ENCODE measurements at regions of chr17 and their contacts with region 1.

Region 1: DNA sequence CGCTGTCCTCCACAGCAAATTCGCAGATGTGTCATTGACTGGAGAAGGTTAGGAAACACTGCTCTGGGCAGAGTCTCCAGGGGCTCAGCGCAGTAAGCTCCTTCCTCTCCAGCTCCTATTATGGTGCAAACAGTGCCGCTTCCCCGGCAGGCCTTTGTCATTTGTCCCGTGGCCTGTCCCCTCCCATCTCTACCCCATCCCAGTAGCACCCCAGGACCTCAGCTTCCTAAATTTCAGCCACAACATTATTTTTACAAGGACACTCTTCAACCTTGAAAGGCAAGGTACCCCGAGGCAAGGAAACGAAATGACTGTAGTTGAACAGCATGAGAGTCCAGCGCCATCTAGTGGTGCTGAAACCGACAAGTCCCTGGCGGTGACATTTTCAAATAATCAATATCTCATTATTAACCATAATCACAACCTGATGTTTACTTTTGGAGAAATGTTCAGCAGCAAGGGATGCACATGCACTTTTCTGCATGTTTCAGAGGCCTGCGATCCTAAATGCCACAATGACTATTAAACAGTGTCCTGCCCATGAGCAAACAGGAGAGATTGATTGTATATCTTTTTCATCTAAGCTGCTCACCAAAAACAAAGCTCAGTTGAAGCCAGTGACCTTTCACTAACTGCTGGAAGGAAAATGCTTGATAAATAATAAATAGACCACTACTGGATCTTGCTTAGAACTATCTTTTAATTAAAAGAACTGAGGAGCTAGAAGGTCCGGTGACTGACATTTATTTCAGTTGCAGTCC is 16.5 kb downstream of the MRPS23 start:
- H3K4me3 ChIP-seq: no peak overlapping the region
- H3K27ac ChIP-seq: peak overlapping the region; percentile 4; the same call in 1 of the 2 replicates
- H3K4me1 ChIP-seq: no peaks in the 10 kb centered on the region; the same call in 1 of the 2 replicates
- CTCF ChIP-seq: peak; percentile 92

Region 2: GRCh38 chr17:57662644-57663308 is 170.6 kb before region 1 on chr17:
- CTCF ChIA-PET with region 1: interaction called, 10 read pairs
- POLR2A ChIA-PET with region 1: no interaction called
- H3K4me3 ChIP-seq: peak overlapping the region; percentile 33
- H3K27ac ChIP-seq: peak overlapping the region; percentile 39
- H3K4me1 ChIP-seq: peaks cover 13% of the 10 kb centered on the region
- CTCF ChIP-seq: no peak

Region 3: GRCh38 chr17:57747221-57748017 is 85.9 kb before region 1 on chr17:
- CTCF ChIA-PET with region 1: interaction called, 11 read pairs
- POLR2A ChIA-PET with region 1: no interaction called
- H3K4me3 ChIP-seq: no peak overlapping the region
- H3K27ac ChIP-seq: no peak overlapping the region
- H3K4me1 ChIP-seq: no peaks in the 10 kb centered on the region
- CTCF ChIP-seq: peak; percentile 55; the same call in 1 of the 2 replicates

Region 4: DNA sequence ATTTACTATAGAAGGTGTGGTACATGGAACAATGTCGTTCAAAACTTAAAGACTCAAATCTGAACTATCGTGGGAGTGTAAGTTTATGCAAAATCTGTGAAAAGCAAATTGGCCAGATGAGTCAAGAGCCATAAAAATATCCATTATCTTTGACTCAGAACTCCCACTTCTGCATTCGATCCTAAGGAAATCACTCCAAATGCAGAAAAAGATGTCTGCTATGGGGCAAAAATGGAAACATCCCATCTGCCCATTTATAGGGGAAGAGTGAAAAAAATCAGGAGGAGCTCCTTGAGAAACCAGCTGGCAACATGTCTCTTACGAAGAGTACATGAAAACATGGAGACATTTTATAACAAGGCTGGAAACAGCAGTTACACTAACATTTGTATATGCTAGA is 44.6 kb before region 1 on chr17:
- CTCF ChIA-PET with region 1: interaction called, 45 read pairs
- POLR2A ChIA-PET with region 1: no interaction called
- H3K4me3 ChIP-seq: no peak overlapping the region
- H3K27ac ChIP-seq: no peak overlapping the region
- H3K4me1 ChIP-seq: no peaks in the 10 kb centered on the region
- CTCF ChIP-seq: no peak

Region 5: DNA sequence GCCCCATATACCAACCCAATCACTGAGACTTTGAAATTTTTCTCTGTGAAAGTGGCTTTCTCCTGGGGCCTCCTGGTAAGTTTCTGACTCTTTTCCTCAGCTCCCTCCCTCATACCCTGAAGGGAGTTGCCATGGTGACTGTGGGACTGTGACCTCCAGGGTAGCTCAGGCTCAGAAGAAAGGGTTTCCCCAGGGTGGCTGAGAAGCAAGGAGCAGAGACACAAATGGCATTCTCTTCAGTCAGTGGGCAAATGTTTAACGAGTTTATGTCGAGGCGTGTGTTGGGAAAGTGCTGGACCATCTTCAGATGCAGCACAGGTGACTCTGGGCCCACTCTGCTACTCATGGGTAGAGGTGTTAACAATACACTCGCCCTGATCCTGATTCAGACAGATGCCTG is 30.3 kb before region 1 on chr17:
- CTCF ChIA-PET with region 1: interaction called, 13 read pairs
- POLR2A ChIA-PET with region 1: no interaction called
- H3K4me3 ChIP-seq: no peak overlapping the region
- H3K27ac ChIP-seq: no peak overlapping the region
- H3K4me1 ChIP-seq: peaks cover 4% of the 10 kb centered on the region; the same call in 1 of the 2 replicates
- CTCF ChIP-seq: no peak

Region 6: DNA sequence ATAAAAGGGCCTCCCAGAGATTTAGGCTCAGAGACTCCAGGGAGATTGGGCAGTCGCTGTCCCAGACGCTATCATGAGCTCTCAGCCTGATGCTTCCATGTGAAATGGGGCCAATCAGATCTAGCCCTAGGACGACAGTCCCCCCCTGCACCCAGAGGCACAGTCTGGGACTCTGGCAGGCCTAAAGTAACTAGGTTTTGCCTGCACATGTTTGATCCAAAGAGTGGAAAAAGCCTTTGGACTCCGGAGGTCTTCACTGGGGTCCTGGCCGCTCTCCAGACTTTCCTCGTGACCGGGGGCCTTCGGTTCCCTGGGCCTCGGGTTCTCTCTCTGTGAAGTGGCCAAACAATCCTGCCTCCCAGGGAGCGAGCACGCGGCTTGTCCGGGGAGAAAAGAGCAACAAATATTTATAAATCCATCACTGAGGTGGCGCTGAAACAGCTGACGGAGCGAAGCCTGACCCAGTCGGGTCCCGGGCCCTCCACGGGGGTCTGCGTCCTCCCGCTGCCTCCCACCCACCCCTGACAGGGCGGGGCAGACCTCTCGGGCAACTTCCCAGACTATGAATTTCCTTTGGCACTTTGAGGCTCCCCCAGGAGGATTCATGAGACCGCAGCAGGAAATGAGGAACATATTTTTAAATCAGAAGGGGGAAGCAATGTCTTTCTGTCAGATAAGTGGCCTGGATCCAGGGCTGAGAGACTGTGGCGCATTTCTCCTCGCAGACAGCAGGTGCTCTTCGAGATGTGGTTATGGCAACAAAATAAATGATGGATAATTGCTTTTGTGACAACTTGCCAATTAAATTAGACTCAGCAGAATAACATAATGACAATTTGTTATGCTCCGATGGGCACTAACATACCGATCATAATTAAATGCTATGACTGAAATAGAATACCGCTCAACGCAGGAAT is 22.4 kb before region 1 on chr17:
- CTCF ChIA-PET with region 1: interaction called, 27 read pairs
- POLR2A ChIA-PET with region 1: no interaction called
- H3K4me3 ChIP-seq: no peak overlapping the region
- H3K27ac ChIP-seq: peak overlapping the region; percentile 93
- H3K4me1 ChIP-seq: peaks cover 24% of the 10 kb centered on the region
- CTCF ChIP-seq: peak; percentile 31

Region 7: DNA sequence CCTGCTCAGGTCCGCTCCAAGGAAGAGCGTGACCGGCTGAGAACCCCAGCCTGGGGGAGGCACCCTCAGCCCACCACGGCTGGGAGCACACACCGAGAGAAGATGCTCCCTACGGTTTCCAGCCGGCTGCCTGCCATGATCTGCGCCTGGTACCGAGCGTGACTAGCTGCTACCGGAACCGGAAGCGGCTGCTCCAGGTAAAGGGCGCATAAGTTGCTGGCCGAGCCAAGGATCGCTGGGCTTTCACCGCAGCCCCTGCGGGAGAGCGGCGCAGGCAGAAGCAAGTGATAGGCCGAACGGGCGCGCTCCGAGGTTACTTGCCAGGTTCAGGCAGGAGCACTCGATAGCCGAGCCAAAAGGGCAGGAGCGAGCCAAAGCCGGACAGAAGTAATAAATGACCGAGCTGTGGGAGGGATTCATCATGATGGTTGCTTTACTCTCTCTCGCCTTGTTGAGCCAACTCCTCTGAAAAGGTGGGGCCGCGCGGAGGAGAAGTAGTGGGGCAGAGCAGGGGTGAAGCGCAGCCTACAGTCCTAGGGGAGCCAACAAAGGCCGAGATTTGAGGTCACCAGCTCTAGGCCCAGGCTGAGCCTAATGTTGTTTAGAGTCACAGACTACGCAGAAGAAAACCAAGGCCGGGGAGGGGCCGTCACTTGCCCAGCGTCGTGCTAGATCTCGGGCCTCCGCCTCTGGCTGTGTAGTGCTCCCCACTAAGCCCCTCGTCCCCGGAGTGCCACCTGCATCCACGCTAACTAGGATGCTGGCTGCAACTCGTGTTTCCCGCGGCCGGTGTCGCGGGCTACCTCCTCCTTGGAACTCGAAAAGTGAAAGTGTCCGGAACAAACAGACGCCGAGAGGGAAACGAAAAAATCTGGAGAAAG is 16.8 kb after region 1 on chr17 and contains the start of gene MRPS23:
- CTCF ChIA-PET with region 1: interaction called, 54 read pairs
- POLR2A ChIA-PET with region 1: interaction called, 9 read pairs
- H3K4me3 ChIP-seq: peak within 1 kb of the TSS; percentile 99
- H3K27ac ChIP-seq: peak within 1 kb of the TSS; percentile 84
- H3K4me1 ChIP-seq: peaks cover 17% of the 10 kb centered on the region
- CTCF ChIP-seq: no peak

Region 8: DNA sequence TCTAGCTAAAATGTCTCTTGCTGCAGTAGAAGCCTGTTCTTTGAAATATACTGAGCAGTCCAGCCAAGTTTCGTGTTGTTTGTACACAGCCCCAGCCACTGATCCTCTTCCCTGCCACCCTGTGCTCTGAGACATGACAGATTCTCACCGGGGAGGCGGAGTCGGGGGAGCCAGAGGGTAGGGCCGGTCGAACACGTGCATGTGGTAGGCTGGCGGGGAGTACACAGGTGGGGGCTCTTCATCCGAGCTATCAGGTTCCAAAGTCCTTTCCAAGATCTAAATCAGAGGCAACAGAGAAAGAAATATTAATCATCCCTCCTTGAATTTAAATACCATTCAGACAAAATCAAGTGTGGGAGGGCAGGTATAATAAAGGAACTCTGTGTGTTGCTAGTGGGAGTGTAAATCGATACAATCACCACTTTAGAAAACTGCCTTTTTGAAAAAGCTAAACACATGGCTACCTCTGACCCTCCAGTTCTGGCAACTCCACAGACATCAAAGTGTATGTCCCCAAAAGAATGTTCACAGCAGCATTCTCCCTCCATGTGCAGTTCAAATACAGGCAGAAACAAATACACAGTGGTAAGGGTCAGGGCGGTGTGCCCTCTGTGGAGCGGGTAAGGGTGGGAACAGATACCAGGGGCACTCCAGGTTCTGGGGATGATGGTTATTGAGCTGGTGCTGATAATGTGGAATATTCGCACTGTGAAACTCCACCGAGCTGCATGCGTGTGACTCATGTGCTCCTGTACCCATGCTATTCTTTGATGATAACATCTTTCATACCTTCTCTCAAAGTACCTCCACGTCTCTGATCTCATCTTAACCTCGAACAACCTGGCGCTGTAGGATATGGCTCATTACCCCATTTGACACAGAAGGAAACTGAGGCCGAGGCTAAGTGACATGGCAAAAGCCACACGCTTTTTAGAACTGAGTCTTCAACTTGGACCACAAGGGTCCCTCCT is 46.4 kb after region 1 on chr17:
- CTCF ChIA-PET with region 1: no interaction called
- POLR2A ChIA-PET with region 1: no interaction called
- H3K4me3 ChIP-seq: no peak overlapping the region
- H3K27ac ChIP-seq: no peak overlapping the region
- H3K4me1 ChIP-seq: peaks cover 13% of the 10 kb centered on the region
- CTCF ChIP-seq: no peak

Region 9: GRCh38 chr17:57946798-57947358 is 113.5 kb after region 1 on chr17:
- CTCF ChIA-PET with region 1: no interaction called
- POLR2A ChIA-PET with region 1: no interaction called
- H3K4me3 ChIP-seq: no peak overlapping the region
- H3K27ac ChIP-seq: no peak overlapping the region
- H3K4me1 ChIP-seq: peaks cover 52% of the 10 kb centered on the region
- CTCF ChIP-seq: no peak